PC-3 (cell line): ENCODE measurements at regions of chr4 and their contacts with region 1.

Region 1: GRCh38 chr4:25667931-25668557 is 12.4 kb downstream of the SLC34A2 start:
- DNase-seq: peak; percentile 67
- ATAC-seq: peak; percentile 68
- H3K4me3 ChIP-seq: no peak overlapping the region
- H3K27ac ChIP-seq: no peak overlapping the region
- H3K4me1 ChIP-seq: no peaks in the 10 kb centered on the region
- H3K27me3 ChIP-seq: no peaks in the 10 kb centered on the region
- CTCF ChIP-seq: peak; percentile 50

Region 2: DNA sequence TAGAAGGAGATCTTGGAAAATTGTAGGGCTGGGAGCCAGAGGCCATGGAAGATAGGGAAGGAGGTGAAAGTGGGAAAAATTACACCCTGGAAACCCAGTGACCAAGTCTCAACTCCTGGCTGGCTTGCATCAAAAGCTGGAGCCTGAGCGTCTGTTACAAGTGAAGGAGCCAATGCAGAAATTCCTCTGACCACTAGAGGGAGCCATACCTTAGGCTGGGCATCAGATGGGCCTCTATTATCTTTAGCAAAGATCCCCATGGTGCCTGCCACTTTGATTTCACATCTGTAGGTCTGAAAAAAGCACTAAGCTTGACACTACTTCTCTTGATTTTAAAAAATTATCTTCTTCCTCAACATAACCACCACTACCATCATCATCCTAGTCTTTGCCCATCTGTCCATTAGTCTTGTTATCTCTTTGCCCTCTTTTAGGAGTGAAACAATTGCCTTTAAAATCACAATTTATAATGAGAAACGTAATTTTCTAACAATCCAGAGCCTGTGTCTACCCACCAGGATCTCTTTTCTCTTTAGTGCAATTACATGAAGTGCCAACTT is 228.0 kb before region 1 on chr4:
- CTCF ChIA-PET with region 1: no interaction called
- POLR2A ChIA-PET with region 1: no interaction called
- intact Hi-C with region 1: loop called (anchors 10 kb)
- DNase-seq: peak; percentile 81
- ATAC-seq: peak; percentile 82
- H3K4me3 ChIP-seq: no peak overlapping the region
- H3K27ac ChIP-seq: no peak overlapping the region
- H3K4me1 ChIP-seq: no peaks in the 10 kb centered on the region
- H3K27me3 ChIP-seq: no peaks in the 10 kb centered on the region
- CTCF ChIP-seq: peak; percentile 84

Region 3: GRCh38 chr4:25767877-25768725 is 100.1 kb after region 1 on chr4:
- CTCF ChIA-PET with region 1: interaction called, 4 read pairs
- POLR2A ChIA-PET with region 1: interaction called, 4 read pairs
- intact Hi-C with region 1: loop called (anchors 1 kb)
- DNase-seq: peak; percentile 69
- ATAC-seq: peak; percentile 74
- H3K4me3 ChIP-seq: no peak overlapping the region
- H3K27ac ChIP-seq: no peak overlapping the region
- H3K4me1 ChIP-seq: no peaks in the 10 kb centered on the region
- H3K27me3 ChIP-seq: no peaks in the 10 kb centered on the region
- CTCF ChIP-seq: peak; percentile 84